ENCODE measurements at regions of chr7 and their contacts with region 1.

Region 1: DNA sequence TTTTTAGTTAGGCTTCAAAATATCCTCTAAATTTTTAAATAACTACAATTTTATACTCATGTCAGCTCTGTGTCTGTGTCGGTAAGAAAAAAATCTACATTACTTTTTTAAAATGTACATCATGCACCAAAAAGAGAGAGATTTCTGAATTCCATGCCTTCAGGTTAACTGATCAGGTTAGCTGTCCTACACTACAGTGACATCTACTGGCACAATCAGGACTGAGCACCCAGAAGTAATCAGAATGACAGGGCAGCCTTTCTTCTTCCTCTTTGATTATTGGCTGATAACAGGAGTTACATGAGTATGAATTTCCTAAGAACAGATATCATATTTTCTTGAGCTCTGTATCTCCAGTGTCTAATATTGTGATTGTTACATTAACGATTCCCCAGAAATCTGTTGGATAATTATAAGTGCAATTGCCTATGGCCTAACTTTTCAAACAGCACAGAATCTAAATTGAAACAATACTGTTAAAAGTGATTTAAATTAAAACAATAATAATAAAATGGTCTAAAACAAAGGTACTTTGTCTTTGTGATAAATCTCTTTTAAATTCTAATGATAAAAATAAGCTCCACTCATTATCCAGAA is 41.8 kb upstream of the HYCC1 start:
- DNase-seq: peak; percentile 81
- ATAC-seq: peak; percentile 98
- H3K4me3 ChIP-seq: no peak overlapping the region
- H3K4me3 Mint-ChIP-seq: no peak overlapping the region
- H3K27ac ChIP-seq: no peak overlapping the region
- H3K27ac Mint-ChIP-seq: no peak overlapping the region
- H3K4me1 ChIP-seq: no peaks in the 10 kb centered on the region
- H3K4me1 Mint-ChIP-seq: no peaks in the 10 kb centered on the region
- H3K27me3 ChIP-seq: no peaks in the 10 kb centered on the region
- H3K27me3 Mint-ChIP-seq: no peaks in the 10 kb centered on the region
- CTCF ChIP-seq: peak; percentile 94

Region 2: GRCh38 chr7:22559829-22560489 is 495.7 kb before region 1 on chr7:
- CTCF ChIA-PET with region 1: interaction called, 141 read pairs
- POLR2A ChIA-PET with region 1: no interaction called
- intact Hi-C with region 1: no loop called
- DNase-seq: peak; percentile 88
- ATAC-seq: peak; percentile 90
- H3K4me3 ChIP-seq: no peak overlapping the region
- H3K4me3 Mint-ChIP-seq: peak overlapping the region; percentile 51
- H3K27ac ChIP-seq: no peak overlapping the region
- H3K27ac Mint-ChIP-seq: peak overlapping the region; percentile 26
- H3K4me1 ChIP-seq: peaks cover 39 to 47% of the 10 kb centered on the region in 2 donors
- H3K4me1 Mint-ChIP-seq: peaks cover 41% of the 10 kb centered on the region
- H3K27me3 ChIP-seq: no peaks in the 10 kb centered on the region
- H3K27me3 Mint-ChIP-seq: no peaks in the 10 kb centered on the region
- CTCF ChIP-seq: peak; percentile 95

Region 3: GRCh38 chr7:22776964-22777363 is 278.7 kb before region 1 on chr7:
- CTCF ChIA-PET with region 1: interaction called, 78 read pairs
- POLR2A ChIA-PET with region 1: no interaction called
- intact Hi-C with region 1: loop called (anchors 1 kb)
- DNase-seq: no peak
- ATAC-seq: no peak
- H3K4me3 ChIP-seq: no peak overlapping the region
- H3K4me3 Mint-ChIP-seq: no peak overlapping the region
- H3K27ac ChIP-seq: no peak overlapping the region
- H3K27ac Mint-ChIP-seq: no peak overlapping the region
- H3K4me1 ChIP-seq: no peaks in the 10 kb centered on the region
- H3K4me1 Mint-ChIP-seq: no peaks in the 10 kb centered on the region
- H3K27me3 ChIP-seq: peaks cover 0 to 4% (median 0%) of the 10 kb centered on the region in 4 experiments
- H3K27me3 Mint-ChIP-seq: peaks cover 7% of the 10 kb centered on the region
- CTCF ChIP-seq: no peak

Region 4: DNA sequence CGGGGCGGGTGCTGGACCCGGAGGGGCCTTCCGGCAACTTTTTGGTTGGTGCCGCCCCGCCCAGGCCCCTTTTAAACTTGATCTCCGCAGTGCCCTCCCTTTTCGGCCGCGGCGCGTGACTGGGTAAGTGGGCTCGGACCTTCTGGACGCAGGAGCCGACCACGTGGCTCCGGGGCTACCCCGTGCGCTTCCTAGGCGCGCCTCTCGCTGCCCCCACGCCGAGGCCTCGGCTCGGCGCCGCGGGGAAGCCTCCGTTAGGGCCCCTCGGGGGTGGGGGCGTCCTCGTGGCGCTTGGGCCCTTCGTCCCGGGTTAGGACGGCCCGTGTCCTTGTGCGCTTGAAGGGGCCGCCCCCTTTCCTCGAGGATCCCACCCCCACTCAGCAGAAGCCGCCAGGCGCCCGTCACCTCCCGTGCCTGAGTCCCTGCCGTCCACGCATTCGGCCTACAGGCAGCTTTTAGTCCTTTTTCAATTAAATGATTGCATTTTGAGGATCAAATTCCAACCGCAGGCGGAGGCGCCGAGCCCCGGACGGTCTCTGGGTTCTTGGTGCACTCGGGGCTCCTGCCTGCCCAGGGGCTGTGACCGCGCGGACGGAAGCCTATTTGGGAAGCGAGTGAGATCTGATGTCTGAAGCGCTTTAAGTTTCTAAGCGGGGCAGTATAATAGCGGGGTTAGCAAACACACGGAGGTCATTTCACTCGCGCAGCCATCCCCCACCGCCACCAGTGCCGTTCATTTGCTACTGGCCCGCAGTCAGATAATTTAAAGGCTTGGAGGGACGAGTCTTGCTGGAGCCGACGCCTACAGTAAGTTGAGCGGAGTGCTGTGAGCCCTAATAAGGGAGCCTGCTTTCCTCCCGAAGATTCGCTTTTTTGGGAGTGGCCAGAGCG is 201.3 kb before region 1 on chr7:
- CTCF ChIA-PET with region 1: interaction called, 17 read pairs
- POLR2A ChIA-PET with region 1: no interaction called
- intact Hi-C with region 1: loop called (anchors 1 kb)
- DNase-seq: peak; percentile 88
- ATAC-seq: peak; percentile 83
- H3K4me3 ChIP-seq: peak overlapping the region; percentile 74 to 87 (median 80)
- H3K4me3 Mint-ChIP-seq: peak overlapping the region; percentile 97
- H3K27ac ChIP-seq: peak overlapping the region; percentile 71 to 87
- H3K27ac Mint-ChIP-seq: peak overlapping the region; percentile 94
- H3K4me1 ChIP-seq: peaks cover 17 to 27% of the 10 kb centered on the region in 2 donors
- H3K4me1 Mint-ChIP-seq: peaks cover 38% of the 10 kb centered on the region
- H3K27me3 ChIP-seq: no peaks in the 10 kb centered on the region
- H3K27me3 Mint-ChIP-seq: no peaks in the 10 kb centered on the region
- CTCF ChIP-seq: peak; percentile 84

Region 5: DNA sequence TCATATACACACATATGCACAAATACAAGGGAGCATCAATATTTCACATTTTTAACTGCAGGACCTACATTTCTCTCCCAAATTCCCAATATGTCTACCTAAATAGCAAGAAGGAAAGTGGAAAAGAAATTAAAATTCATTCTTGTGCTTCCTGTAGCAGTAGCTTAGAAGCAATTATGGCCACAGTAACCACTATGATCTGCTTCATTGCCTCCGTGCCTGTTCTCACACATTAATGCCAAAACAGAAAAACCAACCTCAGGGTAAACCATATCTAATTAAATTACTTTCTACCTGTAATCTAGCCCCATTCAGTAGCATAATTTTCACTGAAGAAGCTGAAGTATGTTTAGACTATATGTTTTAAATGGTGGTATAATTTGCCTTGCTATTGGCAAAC is 96.9 kb before region 1 on chr7:
- CTCF ChIA-PET with region 1: interaction called, 15 read pairs
- POLR2A ChIA-PET with region 1: no interaction called
- intact Hi-C with region 1: loop called (anchors 10 kb)
- DNase-seq: peak; percentile 7
- ATAC-seq: no peak
- H3K4me3 ChIP-seq: no peak overlapping the region
- H3K4me3 Mint-ChIP-seq: no peak overlapping the region
- H3K27ac ChIP-seq: no peak overlapping the region
- H3K27ac Mint-ChIP-seq: no peak overlapping the region
- H3K4me1 ChIP-seq: peaks cover 0 to 8% of the 10 kb centered on the region in 2 donors
- H3K4me1 Mint-ChIP-seq: peaks cover 8% of the 10 kb centered on the region
- H3K27me3 ChIP-seq: no peaks in the 10 kb centered on the region
- H3K27me3 Mint-ChIP-seq: no peaks in the 10 kb centered on the region
- CTCF ChIP-seq: no peak

Region 6: GRCh38 chr7:23026164-23026563 is 29.5 kb before region 1 on chr7:
- CTCF ChIA-PET with region 1: interaction called, 14 read pairs
- POLR2A ChIA-PET with region 1: no interaction called
- intact Hi-C with region 1: no loop called
- DNase-seq: no peak
- ATAC-seq: no peak
- H3K4me3 ChIP-seq: no peak overlapping the region
- H3K4me3 Mint-ChIP-seq: no peak overlapping the region
- H3K27ac ChIP-seq: peak overlapping the region in 1 of 2 donors; percentile 28
- H3K27ac Mint-ChIP-seq: peak overlapping the region; percentile 13
- H3K4me1 ChIP-seq: peaks cover 21 to 36% of the 10 kb centered on the region in 2 donors
- H3K4me1 Mint-ChIP-seq: peaks cover 39% of the 10 kb centered on the region
- H3K27me3 ChIP-seq: no peaks in the 10 kb centered on the region
- H3K27me3 Mint-ChIP-seq: no peaks in the 10 kb centered on the region
- CTCF ChIP-seq: no peak

Region 7: GRCh38 chr7:23783115-23783514 is 727.4 kb after region 1 on chr7:
- CTCF ChIA-PET with region 1: no interaction called
- POLR2A ChIA-PET with region 1: no interaction called
- intact Hi-C with region 1: no loop called
- DNase-seq: no peak
- ATAC-seq: no peak
- H3K4me3 ChIP-seq: no peak overlapping the region
- H3K4me3 Mint-ChIP-seq: no peak overlapping the region
- H3K27ac ChIP-seq: no peak overlapping the region
- H3K27ac Mint-ChIP-seq: no peak overlapping the region
- H3K4me1 ChIP-seq: no peaks in the 10 kb centered on the region
- H3K4me1 Mint-ChIP-seq: no peaks in the 10 kb centered on the region
- H3K27me3 ChIP-seq: peaks cover 0 to 2% (median 0%) of the 10 kb centered on the region in 4 experiments
- H3K27me3 Mint-ChIP-seq: no peaks in the 10 kb centered on the region
- CTCF ChIP-seq: no peak